ENCODE measurements at regions of chr1 and their contacts with region 1.

Region 1: DNA sequence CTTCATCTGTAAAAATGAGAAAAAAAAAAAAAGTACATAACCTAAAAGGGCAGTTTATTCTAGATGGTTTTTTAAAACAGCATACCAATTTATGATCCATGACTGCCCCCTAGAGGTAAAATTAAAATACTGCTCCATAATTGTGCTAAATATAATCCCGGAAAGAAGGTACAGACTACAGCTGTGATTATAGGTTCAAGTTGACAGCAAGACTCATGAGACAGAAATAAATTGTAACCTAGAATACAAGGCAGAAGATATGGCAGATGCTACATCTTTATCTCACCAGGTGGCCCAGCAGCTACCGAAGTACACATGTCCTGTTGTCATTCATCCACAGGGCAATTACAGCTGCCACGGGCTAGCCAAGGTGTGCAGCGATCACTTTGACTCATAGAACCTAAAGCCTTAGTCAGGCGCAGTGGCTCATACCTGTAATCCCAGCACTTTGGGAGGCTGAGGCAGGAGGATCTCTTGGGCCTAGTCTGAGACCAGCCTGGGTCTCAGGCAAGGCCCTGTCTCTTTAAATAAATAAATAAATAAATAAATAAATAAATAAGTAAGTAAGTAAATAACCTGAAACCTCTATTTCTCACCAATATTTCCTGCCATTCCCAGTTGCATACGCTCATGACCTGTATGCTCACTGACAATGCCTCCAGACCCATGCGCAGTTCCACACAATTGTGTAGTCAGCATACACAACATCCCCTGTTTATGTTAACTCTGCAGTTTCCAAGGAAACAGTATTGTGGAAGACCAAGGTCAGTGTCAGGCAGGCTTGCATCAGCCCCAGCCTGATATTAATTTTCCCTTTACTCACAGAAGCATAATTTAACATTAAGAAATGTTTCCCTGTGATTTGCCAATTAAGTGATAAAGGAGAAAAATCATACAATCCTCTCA is 18.3 kb upstream of the PPIE start:
- DNase-seq: peak in 1 of 2 donors; percentile 85
- ATAC-seq: peak; percentile 78 to 85 (median 82)
- H3K4me3 ChIP-seq: no peak overlapping the region
- H3K4me3 Mint-ChIP-seq: no peak overlapping the region
- H3K27ac ChIP-seq: no peak overlapping the region
- H3K27ac Mint-ChIP-seq: no peak overlapping the region
- H3K4me1 ChIP-seq: no peaks in the 10 kb centered on the region
- H3K4me1 Mint-ChIP-seq: no peaks in the 10 kb centered on the region
- H3K27me3 ChIP-seq: peaks cover 14% of the 10 kb centered on the region
- H3K27me3 Mint-ChIP-seq: peaks cover 32 to 46% of the 10 kb centered on the region in 2 donors
- CTCF ChIP-seq: peak; percentile 88

Region 2: DNA sequence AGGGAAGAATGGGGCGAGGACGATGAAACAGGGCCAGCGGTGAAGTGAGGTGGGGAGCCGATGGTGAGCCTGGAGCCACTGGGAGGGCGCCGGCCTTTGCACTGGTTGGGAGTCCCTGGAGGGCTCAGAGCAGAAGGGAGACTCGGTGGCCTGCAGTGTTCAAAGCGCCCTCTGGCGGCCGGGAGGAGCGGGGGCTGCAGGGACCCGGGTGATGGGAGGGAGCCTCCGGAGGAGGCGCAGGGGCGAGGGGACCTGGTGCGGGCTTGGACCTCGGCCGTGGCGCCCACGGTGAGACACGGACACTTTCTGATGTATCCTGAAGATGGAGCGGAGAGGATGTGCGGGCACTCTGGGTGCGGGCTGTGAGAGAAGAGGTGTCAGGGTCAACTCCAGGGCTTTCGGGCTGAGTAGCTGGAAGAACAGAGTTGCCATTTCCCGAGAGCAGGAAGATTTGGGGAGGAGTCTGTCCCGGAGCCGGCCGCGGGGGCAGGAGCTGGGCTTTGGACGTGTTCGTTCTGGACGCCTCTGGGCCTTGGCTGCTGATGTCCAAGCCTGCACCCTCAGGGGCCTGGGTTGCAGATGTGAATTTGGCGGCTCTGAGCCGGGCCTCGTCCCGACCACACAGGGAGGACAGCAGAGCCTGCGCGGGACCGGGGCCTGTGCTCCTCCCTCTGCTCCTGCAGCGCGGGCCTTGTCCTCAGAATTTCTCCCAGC is 110.6 kb before region 1 on chr1:
- intact Hi-C with region 1: loop called (anchors 1 kb)
- DNase-seq: peak; percentile 65 to 87
- ATAC-seq: peak; percentile 80 to 90 (median 83)
- H3K4me3 ChIP-seq: no peak overlapping the region
- H3K4me3 Mint-ChIP-seq: peak overlapping the region; percentile 35
- H3K27ac ChIP-seq: no peak overlapping the region
- H3K27ac Mint-ChIP-seq: no peak overlapping the region
- H3K4me1 ChIP-seq: peaks cover 7% of the 10 kb centered on the region
- H3K4me1 Mint-ChIP-seq: peaks cover 10% of the 10 kb centered on the region in 2 donors
- H3K27me3 ChIP-seq: peaks cover 2% of the 10 kb centered on the region
- H3K27me3 Mint-ChIP-seq: peaks cover 5 to 6% of the 10 kb centered on the region in 2 donors
- CTCF ChIP-seq: peak; percentile 80

Region 3: GRCh38 chr1:39653546-39654031 is 66.8 kb before region 1 on chr1:
- intact Hi-C with region 1: loop called (anchors 5 kb)
- DNase-seq: peak; percentile 51 to 85
- ATAC-seq: peak; percentile 67 to 82 (median 75)
- H3K4me3 ChIP-seq: no peak overlapping the region
- H3K4me3 Mint-ChIP-seq: no peak overlapping the region
- H3K27ac ChIP-seq: no peak overlapping the region
- H3K27ac Mint-ChIP-seq: no peak overlapping the region
- H3K4me1 ChIP-seq: peaks cover 7% of the 10 kb centered on the region
- H3K4me1 Mint-ChIP-seq: peaks cover 0 to 13% of the 10 kb centered on the region in 2 donors
- H3K27me3 ChIP-seq: no peaks in the 10 kb centered on the region
- H3K27me3 Mint-ChIP-seq: peaks cover 0 to 8% of the 10 kb centered on the region in 2 donors
- CTCF ChIP-seq: peak; percentile 87

Region 4: DNA sequence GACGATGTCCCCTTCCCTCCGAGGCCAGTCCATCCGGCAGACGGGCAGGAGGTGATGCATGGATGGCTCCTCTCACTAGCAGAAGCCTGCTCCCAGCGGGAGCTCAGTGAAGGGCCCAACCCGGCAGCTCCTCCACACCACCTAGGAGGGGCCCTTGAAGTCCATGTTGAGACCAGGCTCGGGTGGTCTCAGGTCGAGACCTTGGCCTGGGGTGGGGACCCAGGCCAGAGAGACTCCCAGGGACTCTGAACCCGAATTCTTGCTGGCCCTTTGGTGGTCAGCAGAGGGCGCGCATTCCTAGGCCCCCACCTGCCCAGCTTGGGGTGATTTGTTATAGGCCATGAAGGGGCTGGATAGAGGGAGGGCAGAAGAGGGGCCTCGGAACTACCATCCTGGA is 47.8 kb before region 1 on chr1:
- intact Hi-C with region 1: loop called (anchors 5 kb)
- DNase-seq: peak; percentile 22 to 68
- ATAC-seq: peak in 1 of 3 donors; percentile 41
- H3K4me3 ChIP-seq: no peak overlapping the region
- H3K4me3 Mint-ChIP-seq: peak overlapping the region; percentile 68
- H3K27ac ChIP-seq: no peak overlapping the region
- H3K27ac Mint-ChIP-seq: no peak overlapping the region
- H3K4me1 ChIP-seq: peaks cover 14% of the 10 kb centered on the region
- H3K4me1 Mint-ChIP-seq: peaks cover 0 to 5% of the 10 kb centered on the region in 2 donors
- H3K27me3 ChIP-seq: peaks cover 16% of the 10 kb centered on the region
- H3K27me3 Mint-ChIP-seq: peaks cover 35 to 50% of the 10 kb centered on the region in 2 donors
- CTCF ChIP-seq: peak; percentile 22

Region 5: DNA sequence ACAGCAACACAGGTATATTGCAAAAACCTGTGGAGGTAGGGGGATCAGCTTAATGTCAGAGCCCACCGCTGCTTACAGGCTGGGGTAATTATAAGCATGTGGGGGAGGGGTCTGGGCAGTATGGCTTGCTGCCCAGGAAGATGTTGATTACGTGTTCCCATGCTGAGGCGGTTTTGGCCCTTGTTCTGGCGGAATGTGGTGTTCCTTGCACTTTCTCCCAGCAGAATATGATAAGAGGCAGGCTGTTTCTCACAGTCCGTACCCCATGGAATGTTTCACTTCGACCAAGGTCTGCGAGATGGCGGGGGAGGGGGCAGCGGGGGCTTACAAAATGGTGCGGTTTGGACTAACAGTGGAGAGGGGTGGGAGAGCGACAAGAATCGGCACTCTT is 19.3 kb before region 1 on chr1:
- intact Hi-C with region 1: loop called (anchors 2 kb)
- DNase-seq: no peak
- ATAC-seq: no peak
- H3K4me3 ChIP-seq: no peak overlapping the region
- H3K4me3 Mint-ChIP-seq: no peak overlapping the region
- H3K27ac ChIP-seq: no peak overlapping the region
- H3K27ac Mint-ChIP-seq: no peak overlapping the region
- H3K4me1 ChIP-seq: no peaks in the 10 kb centered on the region
- H3K4me1 Mint-ChIP-seq: no peaks in the 10 kb centered on the region
- H3K27me3 ChIP-seq: no peaks in the 10 kb centered on the region
- H3K27me3 Mint-ChIP-seq: peaks cover 30 to 32% of the 10 kb centered on the region in 2 donors
- CTCF ChIP-seq: no peak